ENCODE measurements at regions of chr4 and their contacts with region 1.

Region 1: DNA sequence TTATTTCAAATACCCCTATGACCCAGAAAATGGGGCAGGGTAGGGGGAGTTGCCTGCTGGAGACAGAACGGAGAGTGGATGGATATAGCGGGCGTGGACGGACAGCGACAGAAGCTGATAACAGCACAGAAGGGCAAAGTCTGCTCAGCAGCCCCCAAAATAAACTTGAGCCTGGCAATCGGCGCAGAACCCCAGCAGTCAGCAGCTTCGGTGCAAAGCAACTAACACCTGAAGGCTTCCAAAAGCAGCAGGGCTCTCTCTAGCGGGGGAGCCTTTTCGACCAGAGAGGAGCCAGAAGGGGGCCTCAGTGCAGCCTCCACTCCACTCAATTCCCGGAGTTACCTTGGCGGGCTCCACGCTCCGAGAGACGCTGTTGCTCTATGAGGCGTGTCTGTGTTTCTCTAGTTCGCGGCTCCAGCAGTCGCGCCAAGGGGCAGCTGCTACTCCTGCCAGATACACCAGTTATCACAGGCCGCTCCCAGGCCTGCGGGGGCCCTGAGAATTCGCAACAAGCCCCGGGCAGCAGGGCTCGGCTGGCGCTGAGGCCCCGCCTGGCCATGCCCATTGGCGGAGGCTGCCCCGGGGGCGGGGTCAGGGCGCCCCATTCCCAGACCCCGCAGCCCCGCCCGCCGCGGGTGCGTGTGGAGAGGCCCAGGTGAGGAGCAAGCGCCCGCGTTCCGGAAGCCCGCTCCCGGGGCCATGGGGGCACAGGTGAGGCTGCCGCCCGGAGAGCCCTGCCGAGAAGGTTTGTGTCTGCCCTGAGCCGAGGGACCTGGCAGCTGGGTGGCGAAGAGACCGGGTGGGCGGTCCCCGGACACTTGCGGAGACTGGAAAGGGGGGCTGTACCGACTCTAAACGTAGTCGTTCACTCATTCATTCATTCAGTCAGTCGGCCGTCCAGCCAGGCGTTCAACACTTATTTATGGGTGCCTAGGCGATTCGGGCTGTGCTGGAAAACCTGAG is at the starts of genes CNGA1 and NIPAL1:
- DNase-seq: peak; percentile 90
- ATAC-seq: peak; percentile 83
- H3K4me3 ChIP-seq: peak within 1 kb of the TSS; percentile 83
- H3K27ac ChIP-seq: peak within 1 kb of the TSS; percentile 96
- H3K4me1 ChIP-seq: peaks cover 19% of the 10 kb centered on the region
- H3K27me3 ChIP-seq: no peaks in the 10 kb centered on the region
- CTCF ChIP-seq: peak; percentile 43; the same call in 1 of the 2 replicates
- total RNA-seq, gene CNGA1: 0.29 and 1.1 TPM in 2 replicates
- total RNA-seq, gene NIPAL1: 5.9 and 7.3 TPM in 2 replicates

Region 2: DNA sequence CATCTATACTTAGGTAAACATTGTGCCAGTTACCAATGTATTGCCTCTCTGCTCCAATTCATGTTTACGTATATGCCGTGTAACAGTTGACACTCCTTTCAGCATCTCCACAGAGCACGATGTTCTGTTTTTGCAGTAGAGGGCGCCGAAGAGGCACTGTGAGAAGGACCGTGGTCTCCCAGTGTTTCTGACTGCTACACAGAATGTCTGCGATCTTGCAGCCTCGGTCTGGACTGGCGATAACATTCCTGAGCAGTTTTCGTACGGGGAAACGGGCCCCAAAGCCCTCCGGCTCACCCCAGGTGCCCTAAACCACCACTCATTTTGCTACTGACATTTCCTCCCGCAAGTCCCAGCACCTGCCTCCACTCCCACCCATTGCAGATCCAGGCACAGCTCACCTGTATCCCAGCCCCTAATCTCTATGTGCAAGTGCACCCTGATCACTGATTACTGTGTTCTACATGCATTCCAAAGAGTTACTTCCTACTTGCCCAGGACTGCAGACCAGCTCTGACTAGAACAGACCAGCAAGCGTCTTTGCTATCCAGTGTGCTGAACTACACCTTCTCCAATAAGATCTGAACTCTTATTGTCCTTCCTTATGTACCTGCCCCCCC is 89.7 kb before region 1 on chr4:
- CTCF ChIA-PET with region 1: no interaction called
- POLR2A ChIA-PET with region 1: no interaction called
- intact Hi-C with region 1: loop called (anchors 5 kb)
- DNase-seq: peak; percentile 67
- ATAC-seq: peak; percentile 97
- H3K4me3 ChIP-seq: peak overlapping the region; percentile 65
- H3K27ac ChIP-seq: no peak overlapping the region
- H3K4me1 ChIP-seq: peaks cover 11% of the 10 kb centered on the region
- H3K27me3 ChIP-seq: no peaks in the 10 kb centered on the region
- CTCF ChIP-seq: peak; percentile 72

Region 3: GRCh38 chr4:47990145-47990544 is 26.3 kb before region 1 on chr4:
- CTCF ChIA-PET with region 1: no interaction called
- POLR2A ChIA-PET with region 1: interaction called, 11 read pairs
- intact Hi-C with region 1: no loop called
- DNase-seq: peak; percentile 6
- ATAC-seq: no peak
- H3K4me3 ChIP-seq: no peak overlapping the region
- H3K27ac ChIP-seq: no peak overlapping the region
- H3K4me1 ChIP-seq: no peaks in the 10 kb centered on the region
- H3K27me3 ChIP-seq: no peaks in the 10 kb centered on the region
- CTCF ChIP-seq: no peak

Region 4: DNA sequence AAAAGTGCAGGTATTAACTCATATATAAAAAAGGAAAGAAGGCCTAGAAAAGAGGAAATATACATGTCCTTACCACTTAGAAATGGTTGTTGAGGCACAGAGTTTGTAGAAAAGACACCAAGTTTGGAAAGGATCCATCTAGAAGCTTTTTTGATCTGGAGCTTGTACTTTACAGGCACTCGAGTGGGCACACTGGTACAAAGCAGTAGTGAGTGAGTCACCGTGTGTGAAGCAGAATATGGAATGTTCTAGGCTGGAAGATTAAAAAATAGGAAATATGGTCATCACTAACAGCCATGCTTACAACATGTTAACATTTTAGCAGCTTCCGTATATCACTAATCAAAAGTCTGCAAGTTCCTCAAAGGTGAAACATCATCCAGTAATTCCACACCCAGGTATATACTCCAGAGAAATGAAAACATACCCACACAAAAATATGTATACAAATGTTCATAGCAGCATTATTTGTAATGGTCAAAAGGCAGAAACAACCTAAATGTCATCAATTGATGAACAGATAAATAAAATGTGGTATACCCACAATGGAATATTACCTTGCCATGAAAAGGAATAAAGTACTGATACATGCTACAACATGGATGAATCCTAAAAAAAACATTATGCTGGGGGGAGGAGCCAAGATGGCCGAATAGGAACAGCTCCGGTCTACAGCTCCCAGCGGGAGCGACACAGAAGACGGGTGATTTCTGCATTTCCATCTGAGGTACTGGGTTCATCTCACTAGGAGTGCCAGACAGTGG is 694.2 kb after region 1 on chr4:
- CTCF ChIA-PET with region 1: no interaction called
- POLR2A ChIA-PET with region 1: no interaction called
- intact Hi-C with region 1: no loop called
- DNase-seq: no peak
- ATAC-seq: no peak
- H3K4me3 ChIP-seq: no peak overlapping the region
- H3K27ac ChIP-seq: no peak overlapping the region
- H3K4me1 ChIP-seq: no peaks in the 10 kb centered on the region
- H3K27me3 ChIP-seq: no peaks in the 10 kb centered on the region
- CTCF ChIP-seq: no peak

Measured in PC-3 (cell line).